ENCODE measurements at regions of chr1 and their contacts with region 1.

Region 1: GRCh38 chr1:43858328-43858731 is 75.3 kb upstream of the ARTN start:
- DNase-seq: peak; percentile 81 to 94
- H3K4me3 ChIP-seq: no peak overlapping the region
- H3K27ac ChIP-seq: peak overlapping the region; percentile 68
- H3K4me1 ChIP-seq: peaks cover 3 to 7% of the 10 kb centered on the region in 2 donors
- H3K27me3 ChIP-seq: no peaks in the 10 kb centered on the region
- CTCF ChIP-seq: no peak
- POLR2A ChIP-seq: no peak

Region 2: GRCh38 chr1:44739361-44740178 is 881.2 kb after region 1 on chr1 and contains the start of gene KIF2C:
- intact Hi-C with region 1: loop called (anchors 5 kb)
- DNase-seq: peak; percentile 95
- H3K4me3 ChIP-seq: peak within 1 kb of the TSS; percentile 47 to 64 (median 56)
- H3K27ac ChIP-seq: peak within 1 kb of the TSS; percentile 83 to 86
- H3K4me1 ChIP-seq: peaks cover 0 to 6% of the 10 kb centered on the region in 2 donors
- H3K27me3 ChIP-seq: no peaks in the 10 kb centered on the region
- CTCF ChIP-seq: no peak
- POLR2A ChIP-seq: peak; percentile 58
- total RNA-seq, gene KIF2C: 0.73 to 2.6 (median 0.98) TPM